ENCODE measurements at regions of chr15 and their contacts with region 1.

Region 1: DNA sequence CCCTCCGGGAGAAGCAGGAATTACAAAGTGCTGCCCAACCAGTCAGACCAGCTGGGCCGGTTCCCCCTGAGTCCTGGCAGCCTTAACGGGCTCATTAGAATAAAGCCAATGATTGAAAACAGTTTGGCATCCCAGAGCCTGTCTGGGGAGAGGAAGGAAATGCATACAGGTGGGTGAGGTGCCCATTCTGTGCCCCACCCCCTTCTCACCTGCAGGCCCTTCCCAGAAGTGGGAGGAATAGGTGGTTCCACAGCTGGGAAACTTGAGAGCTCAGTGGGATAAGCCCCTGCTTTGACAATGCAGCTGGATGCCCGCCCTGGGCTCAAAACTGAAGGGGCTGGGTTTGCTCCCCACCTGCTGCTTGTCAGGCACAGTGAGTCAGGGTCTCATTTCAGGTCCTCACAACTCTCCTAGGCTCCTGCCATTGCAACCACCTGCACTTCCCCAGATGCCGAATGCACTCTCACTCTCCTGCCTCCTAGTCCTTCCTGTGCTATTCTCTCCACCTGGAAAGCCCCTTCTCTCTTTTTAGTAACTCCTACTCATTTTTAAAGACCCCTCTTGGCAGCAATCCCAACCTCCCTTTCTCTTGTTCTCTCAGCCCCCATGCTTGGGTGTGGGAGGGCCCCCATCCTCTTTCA is 5.5 kb upstream of the BUB1B start:
- DNase-seq: no peak
- H3K4me3 ChIP-seq: no peak overlapping the region
- H3K27ac ChIP-seq: no peak overlapping the region
- H3K4me1 ChIP-seq: peaks cover 0 to 9% (median 1%) of the 10 kb centered on the region in 4 donors
- H3K27me3 ChIP-seq: peaks cover 0 to 3% of the 10 kb centered on the region in 2 donors
- CTCF ChIP-seq: no peak

Region 2: DNA sequence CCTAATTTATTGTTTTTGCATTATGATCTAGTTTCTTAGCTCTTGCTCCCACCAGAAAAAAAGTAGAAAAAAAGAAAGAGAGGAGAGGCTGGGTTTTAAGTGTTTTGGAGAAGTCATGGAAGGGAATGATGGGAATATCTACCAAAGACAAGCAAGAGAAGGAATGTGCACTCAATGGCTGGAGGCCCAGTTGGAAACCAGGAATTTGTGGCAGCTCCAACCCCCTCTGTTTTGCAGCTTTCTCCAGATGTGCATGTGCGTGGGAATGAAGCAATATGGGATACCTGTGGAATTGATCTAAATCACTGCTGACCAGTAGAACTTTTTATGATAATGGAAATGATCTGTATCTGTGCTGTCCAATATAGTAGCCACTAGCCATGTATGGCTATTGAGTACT is 194.3 kb before region 1 on chr15:
- intact Hi-C with region 1: no loop called
- DNase-seq: no peak
- H3K4me3 ChIP-seq: no peak overlapping the region
- H3K27ac ChIP-seq: no peak overlapping the region
- H3K4me1 ChIP-seq: no peaks in the 10 kb centered on the region
- H3K27me3 ChIP-seq: no peaks in the 10 kb centered on the region
- CTCF ChIP-seq: no peak

Region 3: GRCh38 chr15:40054605-40055545 is 100.5 kb before region 1 on chr15:
- intact Hi-C with region 1: no loop called
- DNase-seq: peak in 1 of 2 donors; percentile 60
- H3K4me3 ChIP-seq: no peak overlapping the region
- H3K27ac ChIP-seq: no peak overlapping the region
- H3K4me1 ChIP-seq: peaks cover 0 to 19% (median 0%) of the 10 kb centered on the region in 4 donors
- H3K27me3 ChIP-seq: no peaks in the 10 kb centered on the region
- CTCF ChIP-seq: no peak

Region 4: GRCh38 chr15:40114218-40114617 is 41.2 kb before region 1 on chr15:
- intact Hi-C with region 1: loop called (anchors 5 kb)
- DNase-seq: no peak
- H3K4me3 ChIP-seq: no peak overlapping the region
- H3K27ac ChIP-seq: no peak overlapping the region
- H3K4me1 ChIP-seq: peaks cover 0 to 6% (median 4%) of the 10 kb centered on the region in 4 donors
- H3K27me3 ChIP-seq: peaks cover 0 to 19% of the 10 kb centered on the region in 2 donors
- CTCF ChIP-seq: no peak

Region 5: GRCh38 chr15:40217159-40217824 is 61.9 kb after region 1 on chr15:
- intact Hi-C with region 1: no loop called
- DNase-seq: no peak
- H3K4me3 ChIP-seq: no peak overlapping the region
- H3K27ac ChIP-seq: no peak overlapping the region
- H3K4me1 ChIP-seq: no peaks in the 10 kb centered on the region
- H3K27me3 ChIP-seq: no peaks in the 10 kb centered on the region
- CTCF ChIP-seq: peak; percentile 82 to 85

Region 6: DNA sequence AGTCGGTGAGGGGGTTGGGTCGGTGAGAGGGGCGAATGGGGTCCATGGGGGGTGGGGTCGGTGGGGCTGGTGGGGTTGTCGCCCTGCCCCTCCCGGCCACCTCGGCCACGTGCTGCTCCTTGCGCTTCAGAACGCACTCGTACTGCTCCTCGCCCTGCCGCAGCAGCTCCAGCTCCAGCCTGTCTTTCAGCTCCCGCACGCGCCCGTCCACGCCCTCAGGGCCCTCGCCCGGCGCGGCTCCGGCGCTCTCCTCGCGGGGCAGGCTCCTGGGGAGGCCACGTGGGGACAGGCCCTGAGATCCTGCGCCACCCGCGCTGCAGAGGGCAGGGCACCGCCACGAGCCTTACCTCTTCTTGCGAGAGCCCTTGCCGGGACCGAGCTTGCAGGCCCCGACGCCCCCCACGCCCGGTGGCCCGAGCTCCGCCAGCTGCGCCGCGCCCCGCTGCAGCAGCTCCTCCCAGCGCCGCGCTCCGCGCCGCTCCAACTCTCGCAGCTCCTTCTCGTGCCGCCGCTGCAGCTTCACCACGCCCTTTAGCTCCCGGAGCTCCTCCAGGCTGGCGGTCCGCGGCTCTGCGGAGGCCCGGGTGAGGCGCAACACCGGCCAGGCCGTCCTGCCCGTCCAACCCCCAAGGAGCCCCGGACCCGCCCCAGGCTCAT is 135.7 kb after region 1 on chr15:
- intact Hi-C with region 1: no loop called
- DNase-seq: no peak
- H3K4me3 ChIP-seq: peak overlapping the region; percentile 31 to 46
- H3K27ac ChIP-seq: no peak overlapping the region
- H3K4me1 ChIP-seq: peaks cover 0 to 14% (median 12%) of the 10 kb centered on the region in 4 donors
- H3K27me3 ChIP-seq: peaks cover 0 to 39% of the 10 kb centered on the region in 2 donors
- CTCF ChIP-seq: no peak

Measured in tibial artery (tissue), 4 donors.